ENCODE measurements at regions of chr3 and their contacts with region 1.

Region 1: GRCh38 chr3:51637941-51638471 is 33.0 kb upstream of the TEX264 start:
- DNase-seq: peak; percentile 10
- H3K4me3 Mint-ChIP-seq: no peak overlapping the region
- H3K27ac Mint-ChIP-seq: no peak overlapping the region
- H3K4me1 Mint-ChIP-seq: no peaks in the 10 kb centered on the region
- H3K27me3 Mint-ChIP-seq: no peaks in the 10 kb centered on the region

Region 2: GRCh38 chr3:51682079-51682478 is 44.1 kb after region 1 on chr3:
- intact Hi-C with region 1: loop called (anchors 1 kb)
- DNase-seq: peak; percentile 78
- H3K4me3 Mint-ChIP-seq: peak overlapping the region; percentile 70
- H3K27ac Mint-ChIP-seq: peak overlapping the region; percentile 68
- H3K4me1 Mint-ChIP-seq: peaks cover 73% of the 10 kb centered on the region
- H3K27me3 Mint-ChIP-seq: no peaks in the 10 kb centered on the region

Region 3: GRCh38 chr3:51718547-51719409 is 80.8 kb after region 1 on chr3:
- intact Hi-C with region 1: no loop called
- DNase-seq: peak; percentile 63
- H3K4me3 Mint-ChIP-seq: no peak overlapping the region
- H3K27ac Mint-ChIP-seq: no peak overlapping the region
- H3K4me1 Mint-ChIP-seq: peaks cover 16% of the 10 kb centered on the region
- H3K27me3 Mint-ChIP-seq: peaks cover 2% of the 10 kb centered on the region